IMR-90 (cell line): ENCODE measurements at regions of chr3 and their contacts with region 1.

Region 1: GRCh38 chr3:162015856-162016255 is 519.2 kb downstream of the OTOL1 start:
- DNase-seq: no peak
- ATAC-seq: no peak
- H3K4me3 ChIP-seq: no peak overlapping the region
- H3K27ac ChIP-seq: no peak overlapping the region
- H3K4me1 ChIP-seq: no peaks in the 10 kb centered on the region
- H3K27me3 ChIP-seq: no peaks in the 10 kb centered on the region
- CTCF ChIP-seq: no peak
- POLR2A ChIP-seq: no peak
- RAD21 ChIP-seq: no peak

Region 2: GRCh38 chr3:162200836-162201235 is 185.0 kb after region 1 on chr3:
- CTCF ChIA-PET with region 1: no interaction called
- POLR2A ChIA-PET with region 1: interaction called, 10 read pairs
- dilution Hi-C with region 1: no loop called
- in situ Hi-C with region 1: no loop called
- intact Hi-C with region 1: no loop called
- DNase-seq: no peak
- ATAC-seq: no peak; the same call in 1 of the 2 replicates
- H3K4me3 ChIP-seq: no peak overlapping the region
- H3K27ac ChIP-seq: no peak overlapping the region
- H3K4me1 ChIP-seq: no peaks in the 10 kb centered on the region
- H3K27me3 ChIP-seq: no peaks in the 10 kb centered on the region
- CTCF ChIP-seq: no peak
- POLR2A ChIP-seq: no peak
- RAD21 ChIP-seq: no peak